Pancreas (tissue), 10 donors: ENCODE measurements at regions of chr2 and their contacts with region 1.

Region 1: GRCh38 chr2:103161456-103162289 is 399.8 kb downstream of the TMEM182 start:
- DNase-seq: peak in 3 of 6 donors; percentile 18 to 23 (median 20)
- ATAC-seq: peak; percentile 53 to 86 (median 84)
- H3K4me3 ChIP-seq: no peak overlapping the region
- H3K27ac ChIP-seq: no peak overlapping the region
- H3K4me1 ChIP-seq: no peaks in the 10 kb centered on the region
- H3K27me3 ChIP-seq: peaks cover 0 to 15% (median 0%) of the 10 kb centered on the region in 4 donors
- CTCF ChIP-seq: peak; percentile 34 to 75 (median 58)

Region 2: DNA sequence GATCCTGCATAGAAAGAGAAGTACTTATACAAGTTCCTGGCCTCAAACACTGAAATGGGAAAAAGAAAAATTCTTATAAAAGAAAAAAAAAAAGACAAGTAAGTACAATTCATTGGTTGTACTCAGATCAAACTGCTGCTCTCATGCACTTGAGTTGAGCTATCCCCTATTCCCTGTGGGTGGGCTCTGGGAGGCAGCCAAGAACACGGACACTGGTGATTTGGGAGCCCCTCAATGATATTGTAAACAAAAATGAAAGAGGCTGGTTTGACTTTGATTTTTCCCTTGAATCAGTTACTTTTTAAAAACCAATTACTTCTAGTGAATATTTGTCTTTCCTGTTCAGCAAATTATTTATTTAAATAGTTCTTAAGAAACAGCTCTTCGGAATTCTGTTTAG is 174.8 kb before region 1 on chr2:
- intact Hi-C with region 1: no loop called
- DNase-seq: no peak
- ATAC-seq: no peak
- H3K4me3 ChIP-seq: no peak overlapping the region
- H3K27ac ChIP-seq: no peak overlapping the region
- H3K4me1 ChIP-seq: no peaks in the 10 kb centered on the region
- H3K27me3 ChIP-seq: no peaks in the 10 kb centered on the region
- CTCF ChIP-seq: no peak

Region 3: DNA sequence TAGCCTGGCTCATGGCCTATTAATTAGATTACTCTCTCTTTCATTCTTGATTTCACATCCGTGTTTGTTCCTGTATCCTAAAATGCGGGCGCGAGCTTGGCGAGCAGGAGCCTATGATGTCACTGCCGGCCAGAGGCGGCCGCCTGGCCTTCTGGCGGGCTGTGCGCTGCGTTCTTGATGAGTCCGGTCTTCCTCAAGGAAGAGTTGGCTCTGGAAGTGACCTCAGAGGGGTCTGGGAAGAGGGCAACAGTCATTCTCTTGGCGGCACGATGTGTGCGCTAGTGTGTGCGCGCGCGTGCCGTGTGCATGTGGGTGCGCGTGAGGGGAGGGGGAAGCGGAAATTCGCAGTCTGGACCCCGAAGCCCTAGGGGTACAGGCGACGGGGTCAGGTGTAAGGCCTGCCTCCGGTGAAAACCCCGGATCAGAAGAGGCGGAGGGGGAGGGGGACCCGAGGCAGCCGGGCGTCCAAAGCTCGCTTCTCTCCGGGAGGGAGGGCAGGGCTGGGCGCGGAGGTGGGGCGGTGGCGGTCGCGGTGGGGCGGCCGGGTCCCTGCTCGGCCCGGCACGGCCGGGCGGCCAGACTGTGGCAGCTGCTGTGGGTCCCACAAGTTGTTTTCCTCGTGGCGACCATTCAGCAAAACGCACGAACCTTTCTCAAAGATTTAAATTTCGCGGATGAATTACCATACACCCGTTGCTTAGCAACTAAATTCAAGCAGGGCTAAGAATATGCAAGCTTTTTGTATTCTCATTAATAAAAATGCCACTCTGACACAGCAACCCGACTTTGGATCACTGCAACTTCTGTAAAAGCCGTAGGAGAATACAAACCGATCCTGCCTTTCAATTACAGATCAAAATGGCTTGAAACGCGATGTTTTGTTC is 1700.6 kb after region 1 on chr2:
- intact Hi-C with region 1: loop called in 1 of 3 experiments (anchors 10 kb)
- DNase-seq: no peak
- ATAC-seq: no peak
- H3K4me3 ChIP-seq: no peak overlapping the region
- H3K27ac ChIP-seq: no peak overlapping the region
- H3K4me1 ChIP-seq: no peaks in the 10 kb centered on the region
- H3K27me3 ChIP-seq: peaks cover 4 to 94% (median 36%) of the 10 kb centered on the region in 4 donors
- CTCF ChIP-seq: no peak